OCI-LY7 (cell line): ENCODE measurements at regions of chr6 and their contacts with region 1.

Region 1: DNA sequence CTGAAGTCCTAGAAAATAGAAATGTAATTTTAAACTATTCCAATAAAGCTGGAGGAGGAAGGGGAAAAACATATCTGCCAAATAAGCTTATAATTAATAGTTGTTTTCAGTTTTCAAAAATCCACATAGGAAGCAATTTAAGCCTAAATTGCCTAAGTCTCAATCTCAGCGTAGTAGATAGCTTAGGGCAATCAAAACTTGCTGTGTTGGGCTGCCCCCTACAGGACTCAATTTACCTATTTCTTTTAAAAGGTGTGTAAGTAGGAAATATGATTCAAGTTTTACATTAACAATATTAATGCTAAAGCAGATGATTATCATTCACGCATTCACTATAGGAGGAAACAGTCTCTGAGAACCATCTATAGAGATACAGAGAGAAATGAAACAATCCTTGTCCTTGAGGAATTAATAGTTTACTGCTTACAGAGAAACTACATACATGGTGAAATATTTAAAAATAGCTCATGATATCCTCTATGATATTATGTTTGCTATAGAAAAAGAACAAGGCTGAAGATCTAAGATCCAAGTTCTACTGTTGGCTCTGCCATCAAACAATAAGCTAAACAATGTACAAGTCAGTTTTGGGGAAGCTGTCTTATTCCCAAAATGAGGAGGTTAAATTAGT is 102.1 kb downstream of the ATG5 start:
- DNase-seq: peak; percentile 85
- H3K4me3 ChIP-seq: no peak overlapping the region
- H3K27ac ChIP-seq: no peak overlapping the region
- H3K4me1 ChIP-seq: no peaks in the 10 kb centered on the region
- CTCF ChIP-seq: peak; percentile 92

Region 2: DNA sequence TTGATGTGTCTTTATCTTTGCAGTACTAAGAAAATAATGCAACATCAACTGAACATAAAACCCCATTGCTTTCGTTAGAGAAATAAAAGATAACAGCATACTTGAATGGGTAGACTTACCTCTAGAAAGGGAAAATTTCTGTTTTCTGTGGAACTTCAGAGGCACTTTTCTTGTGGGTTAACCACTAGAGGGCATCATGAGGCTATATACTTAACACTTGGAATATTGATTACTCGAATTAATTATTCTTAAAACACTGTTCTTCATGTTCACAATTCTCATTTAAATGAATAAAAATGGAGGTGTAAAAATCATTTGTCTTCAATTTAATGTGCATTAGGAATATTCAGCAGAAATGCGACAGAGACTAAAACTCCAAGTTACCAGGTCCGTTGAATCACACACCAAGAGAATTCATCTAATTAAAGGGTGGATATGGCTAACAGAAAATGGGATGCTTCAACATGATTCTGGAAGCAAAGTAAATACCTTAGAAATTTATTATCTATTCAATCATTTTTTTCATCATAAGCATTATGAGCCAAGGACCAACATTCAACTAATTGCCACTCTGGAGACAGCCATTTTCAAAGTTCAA is 489.8 kb before region 1 on chr6:
- CTCF ChIA-PET with region 1: no interaction called
- POLR2A ChIA-PET with region 1: interaction called, 5 read pairs
- intact Hi-C with region 1: loop called (anchors 1 kb)
- DNase-seq: peak; percentile 73
- H3K4me3 ChIP-seq: no peak overlapping the region
- H3K27ac ChIP-seq: no peak overlapping the region
- H3K4me1 ChIP-seq: peaks cover 3% of the 10 kb centered on the region
- CTCF ChIP-seq: peak; percentile 99

Region 3: DNA sequence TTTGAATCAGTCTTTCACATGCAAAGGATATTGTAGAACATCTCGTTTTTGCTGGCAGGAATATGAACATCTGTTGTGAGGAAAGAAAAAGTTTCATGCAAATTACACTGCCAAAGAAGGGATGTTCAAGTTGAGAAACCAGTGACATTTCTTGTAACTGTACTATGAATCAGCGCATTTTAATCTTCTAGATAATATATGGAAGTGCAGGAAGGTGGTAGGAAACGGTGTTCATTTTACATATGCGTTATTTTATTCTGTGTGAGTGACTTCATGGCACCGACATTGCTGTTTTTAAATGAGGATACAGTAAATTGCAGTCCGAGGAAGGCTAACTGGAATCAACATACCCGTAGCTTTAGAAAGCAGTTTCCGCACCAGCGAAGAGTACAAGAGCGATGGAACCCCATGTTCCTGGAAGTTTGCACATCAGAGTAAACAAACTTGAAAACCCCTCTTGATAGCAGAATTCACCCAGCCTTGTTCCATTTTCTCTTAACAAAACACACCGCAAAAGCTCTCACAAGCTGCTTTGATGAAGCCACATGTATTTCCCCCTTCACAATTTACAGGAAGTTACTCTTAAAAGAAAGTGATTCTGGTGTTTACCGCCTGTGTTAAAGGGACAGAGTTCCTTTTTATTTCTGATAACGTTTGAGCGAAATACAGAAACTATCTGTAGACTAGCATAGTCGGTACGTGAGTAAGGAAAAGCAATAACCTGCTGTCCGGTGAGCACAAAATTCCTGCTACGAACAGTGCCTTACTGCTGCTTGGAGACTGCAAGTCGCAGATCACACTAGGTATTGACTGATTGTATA is 125.8 kb before region 1 on chr6:
- CTCF ChIA-PET with region 1: interaction called, 6 read pairs
- POLR2A ChIA-PET with region 1: interaction called, 11 read pairs
- intact Hi-C with region 1: loop called (anchors 1 kb)
- DNase-seq: peak; percentile 77
- H3K4me3 ChIP-seq: peak overlapping the region; percentile 69
- H3K27ac ChIP-seq: peak overlapping the region; percentile 55
- H3K4me1 ChIP-seq: peaks cover 46% of the 10 kb centered on the region
- CTCF ChIP-seq: no peak

Region 4: GRCh38 chr6:106163446-106163965 is 59.9 kb before region 1 on chr6:
- CTCF ChIA-PET with region 1: interaction called, 3 read pairs
- POLR2A ChIA-PET with region 1: interaction called, 9 read pairs
- intact Hi-C with region 1: loop called (anchors 1 kb)
- DNase-seq: peak; percentile 74
- H3K4me3 ChIP-seq: peak overlapping the region; percentile 34
- H3K27ac ChIP-seq: peak overlapping the region; percentile 73
- H3K4me1 ChIP-seq: peaks cover 58% of the 10 kb centered on the region
- CTCF ChIP-seq: no peak